Activated CD4-positive, alpha-beta T cell treated with anti-CD3 and anti-CD28 coated beads for 36 hours (primary cell): ENCODE measurements at regions of chr3 and their contacts with region 1.

Region 1: GRCh38 chr3:49703443-49703927 is 14.1 kb downstream of the RNF123 start:
- DNase-seq: peak; percentile 81
- ATAC-seq: peak; percentile 99
- H3K4me3 Mint-ChIP-seq: no peak overlapping the region
- H3K27ac Mint-ChIP-seq: no peak overlapping the region
- H3K4me1 Mint-ChIP-seq: no peaks in the 10 kb centered on the region
- H3K27me3 Mint-ChIP-seq: no peaks in the 10 kb centered on the region

Region 2: GRCh38 chr3:49638445-49638844 is 65.0 kb before region 1 on chr3:
- CTCF ChIA-PET with region 1: no interaction called
- POLR2A ChIA-PET with region 1: no interaction called
- intact Hi-C with region 1: no loop called
- DNase-seq: no peak
- ATAC-seq: no peak
- H3K4me3 Mint-ChIP-seq: no peak overlapping the region
- H3K27ac Mint-ChIP-seq: no peak overlapping the region
- H3K4me1 Mint-ChIP-seq: peaks cover 3% of the 10 kb centered on the region
- H3K27me3 Mint-ChIP-seq: no peaks in the 10 kb centered on the region

Region 3: GRCh38 chr3:49906004-49906743 is 202.7 kb after region 1 on chr3:
- CTCF ChIA-PET with region 1: no interaction called
- POLR2A ChIA-PET with region 1: no interaction called
- intact Hi-C with region 1: loop called in 1 of 2 experiments (anchors 5 kb)
- DNase-seq: peak; percentile 77
- ATAC-seq: peak; percentile 45
- H3K4me3 Mint-ChIP-seq: peak overlapping the region; percentile 8
- H3K27ac Mint-ChIP-seq: peak overlapping the region; percentile 48
- H3K4me1 Mint-ChIP-seq: peaks cover 22% of the 10 kb centered on the region
- H3K27me3 Mint-ChIP-seq: no peaks in the 10 kb centered on the region